Psoas muscle (tissue), 8 donors: ENCODE measurements at regions of chr6 and their contacts with region 1.

Region 1: GRCh38 chr6:118959903-118960302 is 24.9 kb upstream of the MCM9 start:
- DNase-seq: no peak
- ATAC-seq: no peak
- H3K4me3 ChIP-seq: no peak overlapping the region
- H3K27ac ChIP-seq: no peak overlapping the region
- H3K4me1 ChIP-seq: no peaks in the 10 kb centered on the region
- H3K27me3 ChIP-seq: no peaks in the 10 kb centered on the region
- CTCF ChIP-seq: no peak

Region 2: GRCh38 chr6:118735320-118735719 is 224.6 kb before region 1 on chr6:
- intact Hi-C with region 1: no loop called
- DNase-seq: no peak
- ATAC-seq: peak in 1 of 4 donors; percentile 64
- H3K4me3 ChIP-seq: no peak overlapping the region
- H3K27ac ChIP-seq: no peak overlapping the region
- H3K4me1 ChIP-seq: peaks cover 7% of the 10 kb centered on the region
- H3K27me3 ChIP-seq: no peaks in the 10 kb centered on the region
- CTCF ChIP-seq: peak; percentile 23

Region 3: DNA sequence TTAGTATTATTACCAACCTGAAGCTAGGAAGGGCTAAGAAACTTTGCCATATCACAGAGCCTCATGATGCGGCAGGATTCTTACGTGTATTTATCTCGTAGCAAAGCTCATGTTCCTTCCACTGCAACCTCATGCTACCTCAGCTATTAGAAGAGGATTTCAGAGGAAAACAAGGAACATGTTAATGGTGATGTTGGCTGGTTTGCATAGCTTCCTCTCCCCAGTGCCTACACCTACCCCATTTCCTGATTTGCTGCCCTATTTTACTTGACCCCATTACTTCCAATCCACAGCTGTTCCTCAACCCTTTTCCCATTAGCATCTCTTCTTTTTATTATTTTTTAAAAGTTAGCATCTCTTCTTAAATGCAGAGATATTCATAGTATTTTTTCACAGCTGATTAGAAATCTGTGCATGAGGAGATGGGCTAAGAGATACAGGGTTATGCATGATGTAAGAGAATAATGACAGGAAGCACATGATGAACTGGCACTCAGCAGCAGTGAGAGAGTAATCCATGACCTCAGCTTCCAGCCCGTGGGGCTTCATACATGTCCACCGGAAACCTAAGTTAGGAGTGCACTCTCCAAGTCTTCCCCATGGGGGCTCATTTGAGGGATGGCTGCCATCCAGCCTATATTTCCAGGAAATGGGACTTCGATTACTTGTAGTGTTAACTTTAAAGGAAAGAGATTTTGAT is 172.0 kb before region 1 on chr6:
- intact Hi-C with region 1: no loop called
- DNase-seq: no peak
- ATAC-seq: peak in 3 of 4 donors; percentile 37 to 51 (median 42)
- H3K4me3 ChIP-seq: no peak overlapping the region
- H3K27ac ChIP-seq: no peak overlapping the region
- H3K4me1 ChIP-seq: no peaks in the 10 kb centered on the region
- H3K27me3 ChIP-seq: no peaks in the 10 kb centered on the region
- CTCF ChIP-seq: no peak

Region 4: GRCh38 chr6:118993803-118994251 is 33.9 kb after region 1 on chr6:
- intact Hi-C with region 1: no loop called
- DNase-seq: no peak
- ATAC-seq: no peak
- H3K4me3 ChIP-seq: no peak overlapping the region
- H3K27ac ChIP-seq: no peak overlapping the region
- H3K4me1 ChIP-seq: no peaks in the 10 kb centered on the region
- H3K27me3 ChIP-seq: no peaks in the 10 kb centered on the region
- CTCF ChIP-seq: no peak

Region 5: GRCh38 chr6:119105282-119105681 is 145.4 kb after region 1 on chr6:
- intact Hi-C with region 1: loop called in 1 of 2 experiments (anchors 5 kb)
- DNase-seq: no peak
- ATAC-seq: no peak
- H3K4me3 ChIP-seq: no peak overlapping the region
- H3K27ac ChIP-seq: no peak overlapping the region
- H3K4me1 ChIP-seq: no peaks in the 10 kb centered on the region
- H3K27me3 ChIP-seq: no peaks in the 10 kb centered on the region
- CTCF ChIP-seq: no peak

Region 6: DNA sequence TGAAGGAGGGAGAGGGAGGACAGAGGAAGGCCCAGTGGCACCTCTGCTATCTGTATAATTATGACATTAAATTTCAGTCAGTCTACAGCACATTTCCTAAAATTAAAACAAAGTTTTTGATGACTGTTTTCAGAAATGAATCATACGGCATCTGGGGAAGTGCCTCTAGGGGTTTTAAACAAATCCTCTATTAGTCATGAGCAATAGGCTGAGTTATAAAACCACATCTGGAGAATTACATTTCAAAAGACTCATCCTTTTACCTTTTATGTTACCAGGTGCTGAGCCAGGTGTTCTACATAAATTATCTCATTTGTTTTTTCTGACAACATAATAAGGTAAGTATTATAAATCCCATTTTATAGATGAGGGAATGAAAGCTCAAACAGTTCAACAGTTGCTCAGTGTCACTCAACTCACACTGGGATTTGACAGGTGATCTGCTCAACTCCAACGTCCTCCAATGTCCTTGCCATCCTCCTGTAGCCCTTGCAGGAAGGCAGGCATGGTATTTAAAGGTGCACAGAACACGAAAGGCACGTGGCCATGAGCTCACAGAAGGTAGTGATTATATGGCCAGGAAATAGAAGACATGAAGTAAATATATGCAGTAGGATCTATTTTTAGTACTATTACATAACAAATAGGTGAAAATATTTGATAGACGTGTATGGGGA is 573.8 kb after region 1 on chr6:
- intact Hi-C with region 1: no loop called
- DNase-seq: no peak
- ATAC-seq: no peak
- H3K4me3 ChIP-seq: no peak overlapping the region
- H3K27ac ChIP-seq: no peak overlapping the region
- H3K4me1 ChIP-seq: no peaks in the 10 kb centered on the region
- H3K27me3 ChIP-seq: no peaks in the 10 kb centered on the region
- CTCF ChIP-seq: no peak